H1 (cell line): ENCODE measurements at regions of chr14 and their contacts with region 1.

Region 1: GRCh38 chr14:47917345-47917954 is 242.0 kb upstream of the MDGA2 start:
- DNase-seq: peak; percentile 21 to 56
- H3K4me3 ChIP-seq: no peak overlapping the region
- H3K27ac ChIP-seq: no peak overlapping the region
- H3K4me1 ChIP-seq: no peaks in the 10 kb centered on the region
- H3K27me3 ChIP-seq: no peaks in the 10 kb centered on the region
- CTCF ChIP-seq: peak in 2 of 3 experiments; percentile 45 to 66; a peak in 2 of 4 replicates
- EP300 ChIP-seq: no peak
- POLR2A ChIP-seq: no peak
- RAD21 ChIP-seq: peak; percentile 79 to 83

Region 2: DNA sequence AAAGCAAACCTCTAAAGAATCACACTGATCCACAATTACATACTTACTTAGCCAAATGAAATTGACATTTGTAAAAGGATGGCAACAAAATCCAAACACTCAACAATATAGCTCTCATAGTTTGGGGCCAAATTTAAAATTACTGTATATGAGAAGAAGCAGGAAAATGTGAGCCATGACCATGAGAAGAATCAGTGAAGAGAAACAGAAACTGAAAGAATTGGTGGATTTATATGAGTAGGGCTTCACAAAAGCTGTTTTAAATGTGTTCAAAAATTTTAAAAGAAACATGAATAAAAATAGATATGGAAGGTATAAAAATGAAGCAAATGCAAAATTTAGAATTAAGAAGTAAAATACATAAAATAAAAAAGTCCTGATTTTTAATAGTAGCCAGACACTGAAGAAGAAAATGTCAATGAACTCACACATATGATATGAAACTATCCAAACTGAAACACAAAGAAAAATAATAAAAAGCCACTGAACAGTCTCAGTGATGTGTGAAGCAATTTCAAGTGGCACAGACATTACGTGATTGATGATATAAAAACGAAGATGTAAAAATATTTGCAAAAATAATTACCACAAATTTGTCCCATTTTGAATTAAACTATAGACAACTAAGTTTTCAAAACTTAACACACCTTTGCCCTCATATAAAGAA is 154.1 kb before region 1 on chr14:
- CTCF ChIA-PET with region 1: no interaction called
- POLR2A ChIA-PET with region 1: no interaction called
- DNase-seq: no peak
- H3K4me3 ChIP-seq: no peak overlapping the region
- H3K27ac ChIP-seq: no peak overlapping the region
- H3K4me1 ChIP-seq: no peaks in the 10 kb centered on the region
- H3K27me3 ChIP-seq: no peaks in the 10 kb centered on the region
- CTCF ChIP-seq: no peak
- EP300 ChIP-seq: no peak
- POLR2A ChIP-seq: no peak
- RAD21 ChIP-seq: no peak

Region 3: GRCh38 chr14:47899158-47899557 is 18.3 kb before region 1 on chr14:
- CTCF ChIA-PET with region 1: no interaction called
- POLR2A ChIA-PET with region 1: no interaction called
- DNase-seq: no peak
- H3K4me3 ChIP-seq: no peak overlapping the region
- H3K27ac ChIP-seq: no peak overlapping the region
- H3K4me1 ChIP-seq: no peaks in the 10 kb centered on the region
- H3K27me3 ChIP-seq: no peaks in the 10 kb centered on the region
- CTCF ChIP-seq: no peak
- EP300 ChIP-seq: no peak
- POLR2A ChIP-seq: no peak
- RAD21 ChIP-seq: no peak

Region 4: DNA sequence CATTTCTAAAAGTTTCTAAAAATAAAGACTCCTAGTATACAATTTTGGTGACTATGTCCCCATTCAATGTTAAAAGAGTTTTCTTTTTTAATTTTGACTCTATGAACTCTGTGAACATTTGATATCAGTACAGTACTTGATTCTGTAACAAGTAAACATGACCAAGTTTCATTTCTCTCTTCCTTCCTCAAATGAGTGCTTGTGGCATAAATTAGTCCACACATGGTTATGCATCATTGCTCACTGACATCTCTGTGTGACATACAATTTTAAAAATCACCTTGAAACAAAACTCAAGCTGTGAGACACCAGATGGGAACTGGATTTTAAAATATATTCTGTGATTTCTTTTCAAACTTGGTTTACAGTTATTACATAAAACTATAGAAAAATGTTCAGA is 11.9 kb after region 1 on chr14:
- CTCF ChIA-PET with region 1: interaction called, 21 read pairs
- POLR2A ChIA-PET with region 1: no interaction called
- DNase-seq: no peak
- H3K4me3 ChIP-seq: no peak overlapping the region
- H3K27ac ChIP-seq: no peak overlapping the region
- H3K4me1 ChIP-seq: no peaks in the 10 kb centered on the region
- H3K27me3 ChIP-seq: no peaks in the 10 kb centered on the region
- CTCF ChIP-seq: no peak
- EP300 ChIP-seq: no peak
- POLR2A ChIP-seq: no peak
- RAD21 ChIP-seq: no peak